ENCODE measurements at regions of chr12 and their contacts with region 1.

Region 1: DNA sequence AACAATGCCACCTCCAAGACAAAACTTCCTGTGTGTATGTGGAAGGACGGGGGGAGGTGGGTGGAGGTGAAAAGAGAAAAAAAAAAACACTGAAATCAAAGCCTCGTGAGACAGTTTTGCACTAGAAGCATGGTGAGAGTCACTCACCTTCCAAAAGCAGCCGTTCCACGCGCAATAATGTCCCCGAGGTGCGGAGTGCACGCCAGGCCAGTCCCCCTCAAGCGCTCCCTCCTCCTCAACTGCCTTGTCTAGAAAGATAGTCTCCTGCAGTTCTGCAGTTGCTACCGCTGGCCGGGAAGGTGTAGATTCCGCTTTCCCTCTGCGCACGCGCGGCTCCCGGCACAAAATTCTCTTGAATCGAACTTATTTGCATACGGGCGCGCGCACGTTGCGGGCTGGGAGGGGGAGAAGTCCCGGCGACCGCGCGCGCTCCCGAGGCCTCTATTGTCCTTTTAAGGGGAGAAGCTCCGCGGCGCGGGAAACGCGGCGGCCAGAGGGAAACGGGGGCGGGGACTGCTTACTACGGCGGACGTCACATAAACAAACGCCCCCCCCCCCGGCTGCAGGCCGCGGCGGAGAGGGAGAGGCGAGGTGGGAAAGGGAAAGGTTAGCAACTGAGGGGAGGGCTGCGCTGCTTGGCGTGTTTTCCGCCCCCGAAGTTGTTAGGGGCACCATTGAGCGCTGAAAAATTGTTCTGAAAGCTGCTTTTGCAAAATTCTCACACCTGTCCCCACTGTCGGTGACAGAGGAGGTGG is at the start of gene SINHCAF:
- DNase-seq: peak; percentile 100
- H3K4me3 ChIP-seq: peak within 1 kb of the TSS; percentile 99
- H3K4me3 Mint-ChIP-seq: peak within 1 kb of the TSS; percentile 98
- H3K27ac Mint-ChIP-seq: peak within 1 kb of the TSS; percentile 99
- H3K4me1 ChIP-seq: peaks cover 27% of the 10 kb centered on the region
- H3K4me1 Mint-ChIP-seq: peaks cover 16% of the 10 kb centered on the region
- H3K27me3 ChIP-seq: no peaks in the 10 kb centered on the region
- H3K27me3 Mint-ChIP-seq: no peaks in the 10 kb centered on the region
- CTCF ChIP-seq: no peak
- total RNA-seq, gene SINHCAF: 286 and 319 TPM in 2 replicates

Region 2: DNA sequence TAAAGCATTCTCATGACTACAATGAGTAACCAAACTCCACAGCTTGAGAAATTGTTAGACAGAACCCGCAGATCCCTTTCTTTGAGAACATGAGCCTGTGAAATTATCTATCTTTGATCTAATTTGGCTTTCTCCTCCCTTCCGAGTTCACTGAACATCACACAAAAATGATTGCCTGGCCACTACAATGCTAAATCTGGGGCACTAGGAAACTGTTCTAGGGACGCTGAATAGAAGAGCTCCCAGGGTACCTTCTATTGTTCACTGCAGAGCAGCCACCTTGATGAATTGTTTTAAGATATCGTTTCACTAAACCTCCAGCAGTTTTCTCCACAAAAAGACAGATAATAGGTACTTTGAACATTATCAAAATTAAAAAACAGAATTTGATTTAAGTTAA is 47.6 kb before region 1 on chr12:
- CTCF ChIA-PET with region 1: no interaction called
- POLR2A ChIA-PET with region 1: no interaction called
- intact Hi-C with region 1: no loop called
- DNase-seq: no peak
- H3K4me3 ChIP-seq: no peak overlapping the region
- H3K4me3 Mint-ChIP-seq: no peak overlapping the region
- H3K27ac Mint-ChIP-seq: no peak overlapping the region
- H3K4me1 ChIP-seq: no peaks in the 10 kb centered on the region
- H3K4me1 Mint-ChIP-seq: peaks cover 5% of the 10 kb centered on the region
- H3K27me3 ChIP-seq: no peaks in the 10 kb centered on the region
- H3K27me3 Mint-ChIP-seq: no peaks in the 10 kb centered on the region
- CTCF ChIP-seq: no peak

Region 3: GRCh38 chr12:31339831-31340622 is 14.0 kb after region 1 on chr12:
- CTCF ChIA-PET with region 1: no interaction called
- POLR2A ChIA-PET with region 1: interaction called, 44 read pairs
- intact Hi-C with region 1: loop called (anchors 1 kb)
- DNase-seq: peak; percentile 73 to 87
- H3K4me3 ChIP-seq: no peak overlapping the region
- H3K4me3 Mint-ChIP-seq: no peak overlapping the region
- H3K27ac Mint-ChIP-seq: peak overlapping the region; percentile 68
- H3K4me1 ChIP-seq: peaks cover 36% of the 10 kb centered on the region
- H3K4me1 Mint-ChIP-seq: peaks cover 31% of the 10 kb centered on the region
- H3K27me3 ChIP-seq: no peaks in the 10 kb centered on the region
- H3K27me3 Mint-ChIP-seq: no peaks in the 10 kb centered on the region
- CTCF ChIP-seq: no peak

Region 4: DNA sequence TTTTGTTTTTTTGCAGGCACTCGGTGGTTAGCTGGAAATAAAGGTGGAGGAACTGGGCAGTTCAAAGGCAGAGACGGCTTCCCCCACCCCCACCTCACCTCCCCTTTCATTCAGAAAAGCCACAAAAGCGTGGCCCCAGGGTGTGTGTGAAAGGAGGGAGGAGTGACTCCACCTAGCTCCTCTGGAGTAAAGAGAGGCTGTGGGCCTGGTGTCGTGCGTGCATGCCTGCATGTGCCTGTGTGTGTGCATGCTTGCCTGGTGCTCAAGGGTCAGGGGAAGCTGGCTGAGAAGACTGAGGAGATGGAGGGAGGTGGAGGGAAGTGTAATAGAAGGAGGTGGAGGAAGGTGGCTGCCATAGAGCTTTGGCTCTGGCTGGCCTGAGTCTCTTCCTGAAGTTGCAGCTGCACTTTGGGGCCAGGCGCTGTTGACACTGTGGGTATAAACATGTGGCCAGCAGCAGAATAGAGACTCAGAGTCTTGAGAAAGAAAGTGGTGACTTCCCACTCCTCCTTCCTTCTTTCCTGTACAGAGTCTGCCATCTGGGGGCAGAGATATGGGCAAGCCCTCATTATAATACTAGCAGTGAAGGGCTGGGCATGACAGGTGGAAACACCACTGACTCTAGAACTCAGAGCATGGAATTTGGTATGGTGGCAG is 36.8 kb after region 1 on chr12:
- CTCF ChIA-PET with region 1: interaction called, 13 read pairs
- POLR2A ChIA-PET with region 1: interaction called, 37 read pairs
- intact Hi-C with region 1: loop called (anchors 2 kb)
- DNase-seq: peak; percentile 73 to 87
- H3K4me3 ChIP-seq: no peak overlapping the region
- H3K4me3 Mint-ChIP-seq: peak overlapping the region; percentile 50
- H3K27ac Mint-ChIP-seq: peak overlapping the region; percentile 82
- H3K4me1 ChIP-seq: peaks cover 24% of the 10 kb centered on the region
- H3K4me1 Mint-ChIP-seq: peaks cover 33% of the 10 kb centered on the region
- H3K27me3 ChIP-seq: no peaks in the 10 kb centered on the region
- H3K27me3 Mint-ChIP-seq: no peaks in the 10 kb centered on the region
- CTCF ChIP-seq: no peak

Region 5: DNA sequence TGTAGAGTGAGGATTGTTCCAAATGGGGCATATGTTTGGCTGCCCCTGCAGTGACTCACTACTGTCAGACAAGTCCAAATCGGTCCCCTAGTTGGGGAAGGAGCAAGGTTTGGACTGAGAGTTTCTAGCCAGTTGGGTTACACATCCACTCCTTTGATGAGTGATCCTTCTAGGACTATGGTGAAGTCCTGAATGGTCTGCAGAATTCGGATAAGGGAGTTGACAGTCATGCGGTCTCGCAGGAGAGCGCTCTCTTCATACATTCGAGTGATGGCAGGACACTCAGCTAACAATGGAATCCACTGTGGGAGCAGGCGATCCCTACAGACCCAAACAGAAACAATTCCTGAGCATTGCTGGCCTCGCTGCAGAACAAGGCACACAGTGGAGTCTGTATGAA is 61.4 kb after region 1 on chr12:
- CTCF ChIA-PET with region 1: interaction called, 3 read pairs
- POLR2A ChIA-PET with region 1: interaction called, 31 read pairs
- intact Hi-C with region 1: loop called (anchors 1 kb)
- DNase-seq: peak in 1 of 2 experiments; percentile 23
- H3K4me3 ChIP-seq: no peak overlapping the region
- H3K4me3 Mint-ChIP-seq: no peak overlapping the region
- H3K27ac Mint-ChIP-seq: peak overlapping the region; percentile 82
- H3K4me1 ChIP-seq: peaks cover 59% of the 10 kb centered on the region
- H3K4me1 Mint-ChIP-seq: peaks cover 50% of the 10 kb centered on the region
- H3K27me3 ChIP-seq: no peaks in the 10 kb centered on the region
- H3K27me3 Mint-ChIP-seq: no peaks in the 10 kb centered on the region
- CTCF ChIP-seq: no peak

Region 6: GRCh38 chr12:31589904-31590641 is 264.0 kb after region 1 on chr12:
- CTCF ChIA-PET with region 1: no interaction called
- POLR2A ChIA-PET with region 1: interaction called, 3 read pairs
- intact Hi-C with region 1: loop called (anchors 2 kb)
- DNase-seq: peak; percentile 90 to 91
- H3K4me3 ChIP-seq: peak overlapping the region; percentile 85
- H3K4me3 Mint-ChIP-seq: peak overlapping the region; percentile 90
- H3K27ac Mint-ChIP-seq: peak overlapping the region; percentile 70
- H3K4me1 ChIP-seq: peaks cover 15% of the 10 kb centered on the region; the same call in 1 of the 2 replicates
- H3K4me1 Mint-ChIP-seq: peaks cover 22% of the 10 kb centered on the region
- H3K27me3 ChIP-seq: no peaks in the 10 kb centered on the region
- H3K27me3 Mint-ChIP-seq: no peaks in the 10 kb centered on the region
- CTCF ChIP-seq: peak in 1 of 2 experiments; percentile 16

Measured in Caco-2 (cell line).